ENCODE measurements at regions of chr2 and their contacts with region 1.

Region 1: GRCh38 chr2:42360890-42361727 is at the start of gene COX7A2L:
- DNase-seq: peak; percentile 96
- ATAC-seq: peak; percentile 91
- H3K4me3 ChIP-seq: peak within 1 kb of the TSS; percentile 98
- H3K27ac ChIP-seq: peak within 1 kb of the TSS; percentile 90
- H3K4me1 ChIP-seq: peaks cover 21% of the 10 kb centered on the region; the same call in 1 of the 2 replicates
- H3K27me3 ChIP-seq: no peaks in the 10 kb centered on the region
- CTCF ChIP-seq: 0 out of 2 replicates have a peak, but pooled peaks have one; percentile 28
- total RNA-seq, gene COX7A2L: 106 and 120 TPM in 2 replicates

Region 2: GRCh38 chr2:42494355-42495233 is 133.5 kb after region 1 on chr2:
- CTCF ChIA-PET with region 1: no interaction called
- POLR2A ChIA-PET with region 1: no interaction called
- intact Hi-C with region 1: loop called (anchors 2 kb)
- DNase-seq: peak; percentile 95
- ATAC-seq: peak; percentile 76
- H3K4me3 ChIP-seq: peak overlapping the region; percentile 75
- H3K27ac ChIP-seq: peak overlapping the region; percentile 71
- H3K4me1 ChIP-seq: peaks cover 15% of the 10 kb centered on the region
- H3K27me3 ChIP-seq: no peaks in the 10 kb centered on the region
- CTCF ChIP-seq: peak; percentile 90

Region 3: GRCh38 chr2:42568401-42569115 is 207.4 kb after region 1 on chr2 and contains the start of gene MTA3:
- CTCF ChIA-PET with region 1: no interaction called
- POLR2A ChIA-PET with region 1: interaction called, 4 read pairs
- intact Hi-C with region 1: loop called (anchors 10 kb)
- DNase-seq: peak; percentile 20
- ATAC-seq: peak; percentile 68
- H3K4me3 ChIP-seq: peak within 1 kb of the TSS; percentile 83
- H3K27ac ChIP-seq: peak within 1 kb of the TSS; percentile 27; the same call in 1 of the 2 replicates
- H3K4me1 ChIP-seq: peaks cover 28% of the 10 kb centered on the region
- H3K27me3 ChIP-seq: no peaks in the 10 kb centered on the region
- CTCF ChIP-seq: no peak
- total RNA-seq, gene MTA3: 27.3 and 27.6 TPM in 2 replicates

Region 4: GRCh38 chr2:42787788-42788477 is 426.8 kb after region 1 on chr2:
- CTCF ChIA-PET with region 1: no interaction called
- POLR2A ChIA-PET with region 1: no interaction called
- intact Hi-C with region 1: loop called (anchors 10 kb)
- DNase-seq: no peak
- ATAC-seq: no peak
- H3K4me3 ChIP-seq: no peak overlapping the region
- H3K27ac ChIP-seq: no peak overlapping the region
- H3K4me1 ChIP-seq: no peaks in the 10 kb centered on the region
- H3K27me3 ChIP-seq: no peaks in the 10 kb centered on the region; the same call in 1 of the 2 replicates
- CTCF ChIP-seq: no peak